ENCODE measurements at regions of chr11 and their contacts with region 1.

Region 1: DNA sequence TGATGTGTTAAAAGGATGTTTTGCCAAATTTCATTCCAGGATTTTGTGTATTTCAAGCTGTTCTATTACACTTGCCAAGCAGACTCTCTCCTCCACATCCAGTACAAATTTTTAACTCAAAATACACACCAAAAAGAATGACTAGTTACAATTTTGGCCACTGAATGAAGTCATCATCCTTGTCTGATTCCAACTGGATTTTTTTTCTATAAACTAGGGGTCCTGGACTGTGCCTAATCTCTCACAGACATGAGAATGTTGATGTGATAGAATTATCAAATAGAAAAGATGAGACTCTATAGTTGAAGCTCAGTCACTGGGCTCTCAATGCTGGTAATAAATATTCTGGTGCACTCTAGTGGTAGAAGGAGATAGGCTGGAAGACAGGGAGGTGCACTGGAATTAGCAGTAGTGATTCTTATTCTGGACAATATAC is 85.8 kb downstream of the FANCF start:
- DNase-seq: peak; percentile 16
- H3K4me3 Mint-ChIP-seq: no peak overlapping the region
- H3K27ac Mint-ChIP-seq: no peak overlapping the region
- H3K4me1 Mint-ChIP-seq: no peaks in the 10 kb centered on the region
- H3K27me3 Mint-ChIP-seq: no peaks in the 10 kb centered on the region
- CTCF ChIP-seq: no peak

Region 2: GRCh38 chr11:22337596-22338485 is 202.0 kb before region 1 on chr11 and contains the start of gene SLC17A6:
- CTCF ChIA-PET with region 1: interaction called, 5 read pairs
- intact Hi-C with region 1: loop called (anchors 1 kb)
- DNase-seq: peak; percentile 32
- H3K4me3 Mint-ChIP-seq: no peak within 1 kb of the TSS
- H3K27ac Mint-ChIP-seq: no peak within 1 kb of the TSS
- H3K4me1 Mint-ChIP-seq: peaks cover 11% of the 10 kb centered on the region
- H3K27me3 Mint-ChIP-seq: peaks cover 62% of the 10 kb centered on the region
- CTCF ChIP-seq: no peak
- total RNA-seq, gene SLC17A6: not detected in 2 replicates

Region 3: DNA sequence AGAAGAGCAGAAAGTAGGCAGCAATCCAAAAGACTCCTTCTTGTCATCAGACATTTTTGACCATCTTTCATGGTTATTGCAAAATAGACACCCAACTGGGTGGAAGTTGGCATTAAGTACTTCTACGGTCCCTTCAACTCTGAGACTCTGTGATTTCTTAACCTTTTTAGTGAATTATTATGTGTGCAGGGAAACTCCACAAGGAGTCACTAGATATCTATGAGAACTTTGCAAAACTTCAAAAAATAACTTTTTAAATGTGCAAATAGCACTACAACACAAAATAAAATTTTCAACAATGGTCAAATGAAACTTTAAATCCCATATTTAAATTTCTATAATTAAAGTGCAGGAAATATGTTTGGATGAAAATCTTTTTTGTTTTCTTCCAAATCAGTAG is 112.9 kb before region 1 on chr11:
- CTCF ChIA-PET with region 1: interaction called, 3 read pairs
- intact Hi-C with region 1: loop called (anchors 1 kb)
- DNase-seq: no peak
- H3K4me3 Mint-ChIP-seq: no peak overlapping the region
- H3K27ac Mint-ChIP-seq: no peak overlapping the region
- H3K4me1 Mint-ChIP-seq: no peaks in the 10 kb centered on the region
- H3K27me3 Mint-ChIP-seq: no peaks in the 10 kb centered on the region
- CTCF ChIP-seq: no peak

Region 4: GRCh38 chr11:22730319-22730718 is 190.5 kb after region 1 on chr11:
- CTCF ChIA-PET with region 1: interaction called, 3 read pairs
- intact Hi-C with region 1: loop called (anchors 5 kb)
- DNase-seq: peak; percentile 14
- H3K4me3 Mint-ChIP-seq: no peak overlapping the region
- H3K27ac Mint-ChIP-seq: no peak overlapping the region
- H3K4me1 Mint-ChIP-seq: no peaks in the 10 kb centered on the region
- H3K27me3 Mint-ChIP-seq: no peaks in the 10 kb centered on the region
- CTCF ChIP-seq: no peak

Region 5: GRCh38 chr11:22787551-22788162 is 247.8 kb after region 1 on chr11:
- CTCF ChIA-PET with region 1: interaction called, 3 read pairs
- intact Hi-C with region 1: loop called (anchors 5 kb)
- DNase-seq: peak; percentile 33
- H3K4me3 Mint-ChIP-seq: no peak overlapping the region
- H3K27ac Mint-ChIP-seq: no peak overlapping the region
- H3K4me1 Mint-ChIP-seq: peaks cover 23% of the 10 kb centered on the region
- H3K27me3 Mint-ChIP-seq: no peaks in the 10 kb centered on the region
- CTCF ChIP-seq: peak; percentile 50